Posterior cingulate gyrus (tissue), 11 donors: ENCODE measurements at regions of chr2 and their contacts with region 1.

Region 1: DNA sequence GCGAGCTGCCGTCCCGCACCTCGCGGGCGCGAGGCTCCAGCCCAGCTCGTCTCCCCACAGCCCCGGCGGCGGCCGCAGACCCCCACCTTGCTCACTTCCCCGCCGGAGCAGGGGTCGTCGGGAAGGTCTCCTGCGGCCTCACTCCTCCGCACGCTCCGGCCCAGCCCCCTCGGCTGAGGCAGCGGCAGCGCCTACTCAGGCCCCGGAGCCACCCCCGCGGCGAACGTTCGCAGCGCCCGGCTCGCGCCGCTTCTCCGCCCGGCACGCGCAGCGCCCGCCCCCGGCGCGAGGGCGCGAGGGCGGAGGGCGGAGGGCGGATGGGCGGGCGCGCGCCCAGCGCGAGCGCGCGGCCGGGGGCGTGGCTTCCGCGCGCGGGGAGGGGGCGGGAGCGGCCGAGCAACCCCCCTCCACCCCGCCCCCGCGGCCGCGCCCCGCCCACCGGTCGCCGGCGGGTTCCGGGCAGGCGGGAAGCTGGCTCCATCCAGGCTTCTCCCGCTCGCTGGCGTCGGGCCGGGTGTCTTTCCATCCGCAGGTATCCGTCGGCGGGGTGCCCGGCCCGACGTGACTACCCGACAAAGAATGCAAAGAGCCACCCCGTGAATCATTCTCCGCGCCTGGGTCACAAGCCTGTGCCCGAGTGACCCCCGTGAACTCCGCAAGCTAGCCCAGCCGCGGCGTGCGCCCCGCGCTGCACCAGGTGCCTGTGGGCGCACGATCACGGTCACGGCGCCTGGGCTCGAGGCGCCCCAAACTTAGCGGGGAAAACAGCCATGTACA is at the start of gene DTNB:
- DNase-seq: peak; percentile 53 to 96 (median 67)

Region 2: DNA sequence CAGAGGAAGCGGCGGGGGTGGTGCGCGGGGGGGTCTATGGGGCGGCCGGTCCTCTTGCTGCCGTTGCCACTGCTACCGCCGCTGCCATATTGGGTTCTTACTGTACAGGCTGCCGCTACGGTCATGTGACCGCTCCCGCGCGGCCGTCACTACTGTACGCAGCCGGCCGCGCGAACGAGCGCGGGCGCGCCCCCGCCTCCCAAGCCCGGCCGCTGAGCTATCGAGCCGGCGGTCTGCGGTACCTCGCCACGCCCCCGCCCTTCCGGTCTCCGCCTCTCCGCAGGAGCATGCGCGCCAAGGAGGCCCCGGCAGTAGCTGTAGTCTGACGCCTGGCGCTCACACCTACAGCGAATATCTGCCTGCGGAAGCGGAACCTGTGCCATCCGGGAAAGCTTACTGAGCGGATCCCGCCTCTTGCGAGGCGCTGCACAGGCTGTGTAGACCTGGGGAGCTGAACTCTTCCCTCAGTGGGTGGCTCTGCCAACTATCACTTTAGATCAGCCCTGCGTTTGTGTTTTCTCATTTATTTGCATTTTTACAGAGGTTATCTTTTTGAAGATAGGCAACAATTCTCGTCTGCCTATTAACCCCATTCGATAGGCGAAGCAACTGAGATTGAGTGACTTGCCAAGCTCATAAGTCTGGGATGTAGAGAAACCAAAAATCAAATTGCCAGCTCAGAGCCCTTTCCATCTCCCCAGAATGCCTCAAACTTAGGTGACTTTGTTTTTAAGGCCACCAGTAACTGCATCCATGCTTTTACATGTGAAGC is 205.1 kb after region 1 on chr2 and contains the start of gene ASXL2:
- intact Hi-C with region 1: loop called (anchors 1 kb)
- DNase-seq: peak; percentile 96 to 100 (median 97)